ENCODE measurements at regions of chr3 and their contacts with region 1.

Region 1: DNA sequence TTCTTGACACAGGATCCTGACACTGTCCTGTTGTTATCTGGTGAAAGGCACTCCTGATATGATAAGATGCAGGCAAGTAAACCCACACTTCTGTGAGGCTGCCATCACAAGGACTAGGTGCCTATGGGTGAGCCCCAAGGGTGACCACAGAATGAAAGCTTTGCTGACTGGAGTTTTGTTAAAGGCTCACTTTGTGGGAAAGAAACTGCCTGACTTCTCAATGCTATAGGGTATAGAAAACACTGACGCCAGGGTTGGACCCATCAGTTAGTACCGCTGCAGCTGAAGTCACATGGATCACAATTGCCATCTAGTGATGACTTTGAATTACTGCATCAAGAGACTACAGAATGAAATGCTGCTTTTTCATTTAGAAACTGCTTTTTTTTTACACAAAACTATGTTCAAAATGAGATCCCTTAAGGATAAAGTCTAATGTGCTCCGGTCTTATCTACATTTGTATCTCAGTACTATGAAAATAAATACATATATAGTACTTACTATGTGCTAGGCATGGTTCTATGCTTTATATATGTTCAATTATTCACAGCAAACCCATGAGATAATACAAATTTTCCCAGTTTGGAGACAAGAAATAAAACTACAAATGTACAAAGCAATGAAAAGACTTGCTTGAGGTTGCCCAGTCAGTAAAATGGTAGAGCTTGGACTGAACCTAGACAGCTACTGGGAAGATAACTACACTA is 64.2 kb upstream of the CMSS1 start:
- DNase-seq: peak in 1 of 3 donors; percentile 23
- ATAC-seq: peak; percentile 62
- H3K4me3 ChIP-seq: no peak overlapping the region
- H3K4me1 ChIP-seq: no peaks in the 10 kb centered on the region
- CTCF ChIP-seq: no peak

Region 2: GRCh38 chr3:99499235-99500158 is 253.9 kb before region 1 on chr3:
- intact Hi-C with region 1: loop called in 1 of 2 experiments (anchors 10 kb)
- DNase-seq: peak in 1 of 3 donors; percentile 55
- ATAC-seq: peak; percentile 42
- H3K4me3 ChIP-seq: no peak overlapping the region
- H3K4me1 ChIP-seq: no peaks in the 10 kb centered on the region
- CTCF ChIP-seq: peak; percentile 33

Region 3: DNA sequence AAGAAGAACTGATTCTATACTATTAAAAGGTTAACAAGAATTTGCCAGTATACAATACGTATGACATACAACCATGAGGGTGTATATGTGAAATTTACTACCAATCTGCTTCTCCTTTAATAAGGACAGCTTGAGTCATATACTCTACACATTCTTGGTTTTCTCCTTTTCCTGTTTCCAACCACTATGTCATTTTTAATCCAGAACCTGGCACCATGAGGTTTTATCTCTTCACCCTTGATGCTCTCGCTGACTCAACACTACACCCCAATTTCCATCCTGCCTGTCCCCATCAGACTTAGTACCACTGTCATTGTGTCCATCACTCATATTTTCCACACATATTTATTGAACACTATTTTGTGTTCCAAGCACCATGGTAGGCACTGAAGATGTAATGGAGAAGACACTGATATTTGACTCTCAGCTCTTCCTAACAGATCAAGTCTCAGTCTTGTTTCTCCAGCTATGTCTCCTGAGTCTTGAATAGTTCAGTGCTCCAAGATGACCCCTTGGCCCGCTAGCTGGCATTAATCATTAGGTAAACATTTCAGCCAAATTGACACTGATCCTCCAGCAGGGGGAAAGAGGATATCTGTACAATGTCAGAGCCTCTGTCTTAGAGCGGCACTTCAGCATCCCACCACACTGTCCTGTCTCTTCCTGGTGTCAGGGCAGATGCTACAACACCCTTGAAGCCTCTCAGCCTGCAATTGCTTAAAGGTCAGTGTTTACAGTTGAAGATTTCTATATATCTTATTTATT is 126.2 kb before region 1 on chr3:
- intact Hi-C with region 1: no loop called
- DNase-seq: no peak
- ATAC-seq: no peak
- H3K4me3 ChIP-seq: no peak overlapping the region
- H3K4me1 ChIP-seq: no peaks in the 10 kb centered on the region
- CTCF ChIP-seq: no peak